Activated T-helper 1 cell treated with anti-CD3 and anti-CD28 coated beads, Interleukin-12 subunit alpha, Interleukin-12 subunit beta, Interleukin-2, Interleukin-4 antibody, amounts not matched to agents 30 ng/mL and 10 ng/mL and 1 ng/mL, durations not matched to agents 14 hours and 24 hours and 36 hours (primary cell): ENCODE measurements at regions of chr13 and their contacts with region 1.

Region 1: DNA sequence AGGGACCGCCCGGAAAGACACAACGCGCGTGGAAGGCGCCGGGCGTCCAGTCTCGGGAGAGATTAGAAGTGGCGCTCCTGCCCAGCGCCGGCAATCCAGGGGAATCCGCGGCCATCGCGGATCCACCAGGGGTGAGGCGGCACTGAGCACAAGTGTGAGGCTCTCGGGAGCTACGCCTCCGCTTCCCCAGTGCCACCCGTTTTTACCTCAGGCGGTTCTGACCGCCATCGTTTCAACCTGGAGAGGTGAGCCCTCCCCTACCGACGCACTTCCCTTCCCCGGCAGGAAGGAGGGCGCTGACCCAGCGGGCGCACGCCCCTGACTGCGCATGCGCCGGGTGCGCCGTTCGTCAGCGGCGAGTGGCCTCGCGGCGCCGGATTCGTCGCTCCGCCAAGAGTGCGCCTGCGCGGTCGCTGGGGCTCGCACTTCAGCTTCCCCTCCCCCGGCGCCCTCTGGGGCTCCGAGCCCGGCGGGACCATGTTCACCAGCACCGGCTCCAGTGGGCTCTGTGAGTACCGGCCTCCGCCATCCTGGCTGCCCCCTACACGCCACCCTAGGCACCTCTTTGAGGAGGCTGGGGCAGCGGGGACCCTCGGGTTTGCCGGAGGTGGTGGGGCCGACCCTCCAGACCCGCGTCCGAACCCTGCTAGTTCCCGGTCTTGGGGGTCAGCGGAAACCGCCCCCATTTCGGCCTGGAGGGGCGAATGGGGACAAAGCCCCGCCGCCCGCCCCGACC is at the start of gene UBAC2:
- DNase-seq: peak; percentile 97
- H3K4me3 Mint-ChIP-seq: peak within 1 kb of the TSS; percentile 98
- H3K27ac Mint-ChIP-seq: peak within 1 kb of the TSS; percentile 96
- H3K4me1 Mint-ChIP-seq: peaks cover 65% of the 10 kb centered on the region
- H3K27me3 Mint-ChIP-seq: no peaks in the 10 kb centered on the region
- total RNA-seq, gene UBAC2: 52.1 and 56.3 TPM in 2 replicates

Region 2: DNA sequence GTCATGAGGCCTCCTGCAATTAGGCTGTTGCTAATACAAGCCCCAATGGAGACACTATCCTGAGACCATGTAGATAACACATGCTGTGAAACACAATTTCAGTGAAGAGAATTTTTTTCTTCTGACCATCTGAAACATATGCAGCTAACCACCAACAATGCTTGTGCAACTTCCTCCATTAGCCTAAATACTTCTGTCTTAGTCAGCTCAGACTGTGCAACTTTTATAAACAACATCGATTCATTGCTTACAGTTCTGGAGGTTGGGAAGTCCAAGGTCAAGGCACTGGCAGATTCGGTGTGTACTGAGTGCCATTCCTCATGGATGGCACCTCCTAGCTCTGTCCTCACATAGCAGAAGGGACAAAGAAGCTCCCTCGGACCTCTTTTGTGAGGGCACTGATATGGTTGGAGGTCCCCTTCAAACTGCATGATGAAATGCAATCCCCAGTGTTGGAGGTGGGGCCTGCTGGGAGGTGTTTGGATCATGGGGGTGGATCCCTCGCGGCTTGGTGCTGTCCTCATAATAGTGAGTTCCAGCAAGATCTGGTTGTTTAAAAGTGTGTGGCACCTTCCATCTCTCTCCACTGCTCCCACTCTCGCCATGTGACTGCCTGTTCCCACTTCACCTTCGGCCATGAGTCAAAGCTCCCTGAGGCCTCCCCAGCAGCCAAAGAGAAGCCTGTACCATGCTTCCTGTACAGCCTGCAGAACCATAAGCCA is 651.4 kb before region 1 on chr13:
- intact Hi-C with region 1: no loop called
- DNase-seq: no peak
- H3K4me3 Mint-ChIP-seq: peak overlapping the region; percentile 38
- H3K27ac Mint-ChIP-seq: peak overlapping the region; percentile 67
- H3K4me1 Mint-ChIP-seq: peaks cover 74% of the 10 kb centered on the region
- H3K27me3 Mint-ChIP-seq: no peaks in the 10 kb centered on the region

Region 3: DNA sequence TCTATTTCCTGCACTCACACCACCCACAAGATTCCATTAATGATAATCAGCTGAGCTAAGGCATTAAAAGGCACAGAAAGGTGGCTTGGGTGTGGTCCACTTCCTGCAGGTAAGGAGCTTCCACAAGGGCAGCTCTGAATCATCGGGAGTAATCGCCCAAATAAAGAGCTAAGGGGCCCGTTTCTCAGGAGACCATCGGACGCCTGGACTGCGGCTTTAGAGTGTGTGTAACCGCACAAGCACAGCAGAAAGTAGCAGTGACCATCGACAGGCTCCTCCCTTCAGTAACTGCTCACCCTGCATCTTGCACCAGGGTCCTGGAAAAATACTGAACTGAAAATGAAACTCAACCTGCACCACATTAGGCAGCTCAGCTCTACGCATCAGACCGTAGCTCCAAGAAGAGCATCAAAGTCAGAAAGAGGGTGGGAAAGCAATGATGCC is 629.6 kb before region 1 on chr13:
- intact Hi-C with region 1: loop called (anchors 5 kb)
- DNase-seq: peak; percentile 51
- H3K4me3 Mint-ChIP-seq: peak overlapping the region; percentile 81
- H3K27ac Mint-ChIP-seq: peak overlapping the region; percentile 91
- H3K4me1 Mint-ChIP-seq: peaks cover 98% of the 10 kb centered on the region
- H3K27me3 Mint-ChIP-seq: no peaks in the 10 kb centered on the region

Region 4: GRCh38 chr13:99015606-99016490 is 184.8 kb before region 1 on chr13:
- intact Hi-C with region 1: no loop called
- DNase-seq: no peak
- H3K4me3 Mint-ChIP-seq: no peak overlapping the region
- H3K27ac Mint-ChIP-seq: peak overlapping the region; percentile 45
- H3K4me1 Mint-ChIP-seq: peaks cover 42% of the 10 kb centered on the region
- H3K27me3 Mint-ChIP-seq: no peaks in the 10 kb centered on the region

Region 5: DNA sequence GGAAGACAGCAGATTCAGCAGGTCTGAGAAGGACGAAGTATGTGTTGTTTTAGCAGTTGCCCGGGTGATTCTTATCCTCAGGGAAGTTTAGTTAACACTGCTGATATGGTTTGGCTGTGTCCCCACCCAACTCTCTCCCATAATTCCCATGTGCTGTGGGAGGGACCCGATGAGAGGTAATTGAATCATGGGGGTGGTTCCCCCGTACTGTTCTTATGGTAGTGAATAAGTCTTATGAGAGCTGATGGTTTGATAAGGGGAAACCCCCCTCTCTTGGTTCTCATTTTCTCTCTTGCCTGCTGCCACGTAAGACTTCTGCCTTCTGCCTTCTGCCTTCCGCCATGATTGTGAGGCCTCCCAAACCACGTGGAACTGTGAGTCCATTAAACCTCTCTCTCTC is 80.9 kb before region 1 on chr13:
- intact Hi-C with region 1: no loop called
- DNase-seq: no peak
- H3K4me3 Mint-ChIP-seq: no peak overlapping the region
- H3K27ac Mint-ChIP-seq: no peak overlapping the region
- H3K4me1 Mint-ChIP-seq: peaks cover 11% of the 10 kb centered on the region
- H3K27me3 Mint-ChIP-seq: peaks cover 2% of the 10 kb centered on the region

Region 6: GRCh38 chr13:99228737-99229691 is 28.4 kb after region 1 on chr13:
- intact Hi-C with region 1: loop called (anchors 1 kb)
- DNase-seq: no peak
- H3K4me3 Mint-ChIP-seq: peak overlapping the region; percentile 76
- H3K27ac Mint-ChIP-seq: peak overlapping the region; percentile 93
- H3K4me1 Mint-ChIP-seq: peaks cover 63% of the 10 kb centered on the region
- H3K27me3 Mint-ChIP-seq: peaks cover 2% of the 10 kb centered on the region

Region 7: DNA sequence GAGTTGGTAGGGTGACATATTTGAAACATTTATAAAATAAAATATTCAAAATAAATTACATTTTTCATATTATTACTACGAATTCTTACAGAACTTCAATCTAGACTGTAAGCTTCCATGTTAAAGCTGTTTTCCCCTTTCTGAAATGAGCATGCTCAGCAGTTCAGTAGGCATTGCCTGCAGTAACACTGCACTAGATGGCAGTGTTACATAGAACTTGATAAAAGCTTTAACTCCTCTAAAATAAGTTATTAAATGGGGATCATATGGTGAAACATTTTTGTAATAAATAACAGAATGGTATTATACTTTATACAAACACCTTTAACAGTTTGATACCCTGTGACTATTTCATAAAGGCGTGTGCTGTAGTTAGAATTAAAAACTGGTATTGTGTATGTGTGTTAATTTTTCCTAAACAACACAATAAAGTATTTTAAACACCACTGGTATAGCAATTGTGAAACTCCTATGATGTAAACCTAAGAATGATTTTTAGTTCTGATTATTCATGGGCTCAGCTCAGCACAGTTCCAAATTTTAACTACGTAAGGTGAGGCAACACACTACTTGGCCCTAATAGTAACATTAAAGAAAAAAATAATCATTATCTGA is 69.1 kb after region 1 on chr13:
- intact Hi-C with region 1: loop called (anchors 1 kb)
- DNase-seq: no peak
- H3K4me3 Mint-ChIP-seq: no peak overlapping the region
- H3K27ac Mint-ChIP-seq: no peak overlapping the region
- H3K4me1 Mint-ChIP-seq: peaks cover 55% of the 10 kb centered on the region
- H3K27me3 Mint-ChIP-seq: no peaks in the 10 kb centered on the region

Region 8: GRCh38 chr13:99342723-99343315 is 142.2 kb after region 1 on chr13:
- intact Hi-C with region 1: no loop called
- DNase-seq: no peak
- H3K4me3 Mint-ChIP-seq: no peak overlapping the region
- H3K27ac Mint-ChIP-seq: no peak overlapping the region
- H3K4me1 Mint-ChIP-seq: peaks cover 29% of the 10 kb centered on the region
- H3K27me3 Mint-ChIP-seq: no peaks in the 10 kb centered on the region

Region 9: DNA sequence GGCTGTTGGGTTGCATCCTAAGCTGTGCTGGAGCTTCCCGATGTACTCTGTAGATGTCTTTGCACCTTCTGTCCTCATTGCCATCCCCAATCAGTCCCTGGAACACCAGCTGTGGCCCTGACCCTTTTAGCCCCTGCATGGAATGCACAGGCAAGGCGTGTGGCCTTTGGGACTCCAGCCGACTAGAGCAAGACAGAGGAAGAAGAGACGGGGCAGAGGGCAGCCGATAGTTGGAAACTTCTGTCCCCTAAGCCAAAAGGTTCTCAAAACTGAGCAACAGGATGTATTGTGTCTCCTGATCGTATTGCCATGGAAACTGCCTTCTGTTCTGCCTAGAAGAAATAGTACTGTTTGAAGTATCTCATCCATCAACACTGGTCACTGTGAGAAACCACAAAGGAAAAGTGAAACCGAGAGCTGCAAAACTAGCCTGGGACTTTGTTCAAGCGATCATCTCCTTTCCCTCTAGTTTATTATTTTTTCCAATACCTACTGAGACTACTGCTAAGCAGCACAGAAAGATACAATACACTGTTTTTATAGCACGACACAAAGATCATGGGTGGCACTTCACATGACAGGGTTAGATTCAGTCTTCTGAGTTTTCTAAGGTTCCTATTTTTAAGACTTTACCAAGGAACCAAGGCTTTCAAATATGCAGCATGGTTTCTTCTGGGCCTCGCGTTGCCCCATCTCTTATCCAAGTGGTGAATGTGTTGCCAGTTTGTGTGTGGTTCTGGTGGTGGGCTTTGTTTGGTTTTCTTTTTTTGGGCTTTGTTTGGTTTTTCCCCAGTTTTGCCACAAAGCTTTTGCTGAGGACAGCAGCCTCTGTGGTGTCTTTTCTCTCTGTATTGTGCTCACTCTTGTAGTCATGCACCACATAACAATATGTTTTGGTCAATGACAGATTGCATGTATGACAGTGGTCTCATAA is 155.8 kb after region 1 on chr13:
- intact Hi-C with region 1: loop called (anchors 1 kb)
- DNase-seq: peak; percentile 74
- H3K4me3 Mint-ChIP-seq: peak overlapping the region; percentile 62
- H3K27ac Mint-ChIP-seq: peak overlapping the region; percentile 95
- H3K4me1 Mint-ChIP-seq: peaks cover 99% of the 10 kb centered on the region
- H3K27me3 Mint-ChIP-seq: peaks cover 3% of the 10 kb centered on the region

Region 10: DNA sequence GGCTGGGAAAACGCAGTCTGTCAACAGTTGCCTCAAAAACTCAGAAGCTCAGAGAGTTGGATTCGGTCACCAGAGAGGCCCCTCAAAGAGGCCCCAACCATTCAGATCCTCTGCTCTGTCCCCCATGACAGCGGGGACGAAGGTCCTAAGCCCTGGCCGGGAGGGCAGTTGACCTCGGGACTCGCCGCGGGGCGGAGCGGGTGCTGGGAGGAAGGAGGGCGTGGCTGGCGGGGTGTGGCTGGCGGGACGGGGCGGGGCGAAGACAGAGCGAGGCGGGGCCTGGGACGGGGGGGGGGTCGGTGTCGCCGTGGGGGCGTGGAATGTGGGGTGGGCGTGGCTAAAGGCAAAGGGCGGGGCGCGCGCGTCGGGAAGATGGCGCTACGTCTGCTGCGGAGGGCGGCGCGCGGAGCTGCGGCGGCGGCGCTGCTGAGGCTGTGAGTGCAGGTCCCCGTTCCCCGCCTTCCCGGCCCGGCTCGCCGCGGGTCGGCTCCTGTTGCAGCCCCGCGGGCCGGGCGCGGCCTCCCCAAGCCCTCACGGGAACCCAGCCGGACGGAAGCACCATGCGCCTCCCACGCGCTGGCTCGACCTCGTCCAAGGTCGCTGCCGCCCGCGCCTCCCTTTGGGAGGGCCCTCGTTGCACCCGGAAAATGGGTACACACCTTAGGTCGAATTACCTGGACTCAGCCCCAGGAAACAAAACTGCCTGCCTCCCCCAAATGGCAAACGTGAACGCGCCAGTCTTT is 405.9 kb after region 1 on chr13:
- intact Hi-C with region 1: loop called (anchors 2 kb)
- DNase-seq: peak; percentile 82
- H3K4me3 Mint-ChIP-seq: peak within 1 kb of the TSS; percentile 89
- H3K27ac Mint-ChIP-seq: peak within 1 kb of the TSS; percentile 81
- H3K4me1 Mint-ChIP-seq: peaks cover 29% of the 10 kb centered on the region
- H3K27me3 Mint-ChIP-seq: peaks cover 4% of the 10 kb centered on the region